Mucosa of descending colon (tissue), 3 donors: ENCODE measurements at regions of chr9 and their contacts with region 1.

Region 1: DNA sequence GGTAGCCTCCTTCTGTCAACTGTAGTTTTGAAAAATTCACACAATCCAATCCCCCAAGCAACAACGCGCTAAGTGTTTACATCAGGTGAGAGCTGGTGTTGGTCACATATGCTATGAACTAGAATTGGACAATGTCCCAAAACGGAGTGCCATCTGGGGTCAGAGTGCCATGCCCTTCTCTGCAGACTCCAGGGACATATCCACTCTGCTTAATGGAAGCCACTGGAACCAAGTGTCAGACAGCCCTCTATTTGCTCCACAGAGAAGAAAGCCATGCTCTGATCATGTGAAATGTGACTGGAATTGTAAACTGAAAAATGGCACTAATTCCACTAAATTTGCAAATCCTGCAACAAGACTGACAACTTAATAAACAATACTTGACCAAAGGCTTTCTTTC is 12.2 kb downstream of the ABCA1 start:
- DNase-seq: no peak
- ATAC-seq: no peak
- H3K4me3 ChIP-seq: no peak overlapping the region
- H3K4me1 ChIP-seq: peaks cover 18% of the 10 kb centered on the region
- CTCF ChIP-seq: no peak

Region 2: GRCh38 chr9:104675611-104676010 is 240.1 kb before region 1 on chr9:
- intact Hi-C with region 1: no loop called
- DNase-seq: no peak
- ATAC-seq: no peak
- H3K4me3 ChIP-seq: no peak overlapping the region
- H3K4me1 ChIP-seq: no peaks in the 10 kb centered on the region
- CTCF ChIP-seq: no peak

Region 3: DNA sequence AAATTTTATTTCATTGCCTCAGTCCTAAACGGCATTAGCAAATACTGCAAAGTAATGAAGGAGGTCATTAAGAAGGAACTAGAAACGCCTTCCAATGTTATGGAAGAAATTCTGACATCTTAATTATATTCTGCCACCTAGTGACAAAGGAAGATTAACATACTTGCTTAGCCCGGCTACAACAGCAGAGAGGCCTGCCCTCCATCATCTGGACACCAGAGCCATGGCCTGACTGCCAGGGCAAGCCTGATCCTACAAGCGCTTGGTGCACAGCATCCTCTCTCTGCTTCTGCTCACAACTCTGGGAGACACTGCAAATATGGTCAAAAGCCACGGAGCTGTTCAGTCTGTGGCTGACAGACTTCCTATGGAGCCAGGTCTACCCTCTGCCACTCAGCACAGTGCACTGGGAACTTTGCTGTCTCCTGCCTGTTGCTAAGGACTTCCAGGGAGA is 241.4 kb after region 1 on chr9:
- intact Hi-C with region 1: loop called in 1 of 2 experiments (anchors 5 kb)
- DNase-seq: peak; percentile 50 to 62 (median 54)
- ATAC-seq: peak; percentile 88
- H3K4me3 ChIP-seq: no peak overlapping the region
- H3K4me1 ChIP-seq: no peaks in the 10 kb centered on the region
- CTCF ChIP-seq: peak; percentile 13